ENCODE measurements at regions of chr16 and their contacts with region 1.

Region 1: DNA sequence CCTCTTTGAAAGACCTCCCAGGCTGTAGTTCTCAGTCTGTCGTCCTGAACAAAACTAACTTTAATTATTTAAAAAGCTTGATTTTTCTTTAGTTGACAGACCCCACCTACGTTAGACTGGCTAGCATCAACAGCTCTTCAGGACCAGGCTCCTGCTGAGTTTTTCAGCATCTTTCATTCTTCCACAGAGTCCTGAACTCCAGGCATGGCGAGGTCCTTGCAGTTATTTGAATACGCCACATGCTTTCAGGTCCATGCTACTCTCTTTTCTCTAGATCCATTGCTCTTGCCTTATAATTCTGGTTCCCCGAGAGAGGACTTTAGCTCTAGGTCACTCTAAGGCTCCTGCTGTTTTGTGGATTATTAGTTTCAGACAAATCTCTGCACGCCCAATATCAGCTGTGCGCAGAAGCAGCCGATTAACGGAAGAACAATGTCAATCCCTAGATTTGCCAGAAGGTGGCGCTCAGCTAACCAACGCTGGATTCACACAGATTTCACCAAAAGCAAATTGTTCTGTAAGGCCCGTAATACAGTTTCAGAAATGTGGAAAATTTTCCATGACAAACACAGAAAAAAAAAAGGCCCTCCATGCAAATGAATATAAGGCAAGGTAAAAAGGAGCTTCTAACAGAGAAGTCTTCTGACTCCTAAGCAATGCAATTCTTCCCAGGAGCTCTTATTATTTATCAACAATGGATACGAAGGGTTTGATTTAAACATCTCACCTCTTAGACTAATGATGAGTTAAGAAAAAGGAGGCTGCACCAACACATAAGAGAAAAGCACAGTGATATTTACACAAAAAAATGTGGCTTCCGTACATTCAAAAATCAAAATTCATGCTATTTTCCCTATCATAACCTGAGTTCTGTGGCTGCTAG is 33.5 kb upstream of the BCO1 start:
- DNase-seq: peak; percentile 37
- H3K4me3 Mint-ChIP-seq: no peak overlapping the region
- H3K27ac Mint-ChIP-seq: no peak overlapping the region
- H3K4me1 Mint-ChIP-seq: peaks cover 8% of the 10 kb centered on the region
- H3K27me3 Mint-ChIP-seq: peaks cover 12% of the 10 kb centered on the region
- CTCF ChIP-seq: peak; percentile 66

Region 2: GRCh38 chr16:81600901-81601428 is 395.9 kb after region 1 on chr16:
- CTCF ChIA-PET with region 1: no interaction called
- intact Hi-C with region 1: no loop called
- DNase-seq: no peak
- H3K4me3 Mint-ChIP-seq: no peak overlapping the region
- H3K27ac Mint-ChIP-seq: peak overlapping the region; percentile 56
- H3K4me1 Mint-ChIP-seq: peaks cover 56% of the 10 kb centered on the region
- H3K27me3 Mint-ChIP-seq: no peaks in the 10 kb centered on the region
- CTCF ChIP-seq: no peak

Region 3: GRCh38 chr16:81737885-81738786 is 533.1 kb after region 1 on chr16:
- CTCF ChIA-PET with region 1: no interaction called
- intact Hi-C with region 1: loop called (anchors 5 kb)
- DNase-seq: peak; percentile 92
- H3K4me3 Mint-ChIP-seq: peak overlapping the region; percentile 53
- H3K27ac Mint-ChIP-seq: no peak overlapping the region
- H3K4me1 Mint-ChIP-seq: no peaks in the 10 kb centered on the region
- H3K27me3 Mint-ChIP-seq: peaks cover 9% of the 10 kb centered on the region
- CTCF ChIP-seq: peak; percentile 94